ENCODE measurements at regions of chr9 and their contacts with region 1.

Region 1: DNA sequence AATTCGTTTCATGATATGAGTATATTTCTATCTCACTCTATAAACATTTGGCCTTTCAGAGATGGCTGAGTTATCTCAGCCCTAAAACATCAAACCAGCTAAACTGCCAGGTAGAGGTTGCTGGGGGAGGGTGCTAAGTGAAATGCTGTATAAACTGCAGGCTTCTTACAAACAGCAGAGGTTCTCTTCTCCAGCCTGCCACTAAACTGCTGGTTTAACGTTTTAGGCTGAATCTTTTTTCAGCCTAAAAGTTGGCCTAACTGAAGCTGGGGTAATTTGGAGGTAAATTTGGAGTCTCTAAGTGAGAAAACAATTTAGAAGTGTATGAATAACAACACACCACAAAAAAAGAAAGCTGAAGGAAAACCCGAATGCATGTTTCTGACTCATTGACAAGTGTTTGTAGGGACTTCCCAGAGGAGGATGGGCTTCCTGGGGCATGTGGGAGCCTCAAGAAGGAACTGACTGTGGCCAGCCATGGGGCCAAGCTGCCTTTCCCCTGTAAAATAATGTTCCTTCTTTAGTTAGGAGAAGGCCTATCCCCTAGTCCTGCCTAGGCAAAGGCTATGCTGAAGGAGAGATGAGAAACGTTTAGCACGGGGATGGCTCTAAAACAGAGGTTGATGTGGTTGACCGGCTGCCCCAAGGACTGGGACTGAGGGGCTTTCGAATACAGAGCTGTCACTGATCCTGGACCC is 44.3 kb downstream of the SLC28A3 start:
- DNase-seq: peak; percentile 87
- H3K4me3 Mint-ChIP-seq: peak overlapping the region; percentile 63
- H3K27ac Mint-ChIP-seq: peak overlapping the region; percentile 100
- H3K4me1 Mint-ChIP-seq: peaks cover 62% of the 10 kb centered on the region
- H3K27me3 Mint-ChIP-seq: no peaks in the 10 kb centered on the region

Region 2: GRCh38 chr9:83707768-83708514 is 588.4 kb before region 1 on chr9 and contains the start of gene UBQLN1:
- intact Hi-C with region 1: loop called (anchors 1 kb)
- DNase-seq: peak; percentile 97
- H3K4me3 Mint-ChIP-seq: peak within 1 kb of the TSS; percentile 87
- H3K27ac Mint-ChIP-seq: peak within 1 kb of the TSS; percentile 99
- H3K4me1 Mint-ChIP-seq: peaks cover 26% of the 10 kb centered on the region
- H3K27me3 Mint-ChIP-seq: no peaks in the 10 kb centered on the region
- total RNA-seq, gene UBQLN1: 131 and 144 TPM in 2 replicates

Region 3: GRCh38 chr9:83956434-83957247 is 339.7 kb before region 1 on chr9:
- intact Hi-C with region 1: loop called (anchors 10 kb)
- DNase-seq: peak; percentile 92
- H3K4me3 Mint-ChIP-seq: peak overlapping the region; percentile 99
- H3K27ac Mint-ChIP-seq: peak overlapping the region; percentile 97
- H3K4me1 Mint-ChIP-seq: peaks cover 12% of the 10 kb centered on the region
- H3K27me3 Mint-ChIP-seq: no peaks in the 10 kb centered on the region

Region 4: DNA sequence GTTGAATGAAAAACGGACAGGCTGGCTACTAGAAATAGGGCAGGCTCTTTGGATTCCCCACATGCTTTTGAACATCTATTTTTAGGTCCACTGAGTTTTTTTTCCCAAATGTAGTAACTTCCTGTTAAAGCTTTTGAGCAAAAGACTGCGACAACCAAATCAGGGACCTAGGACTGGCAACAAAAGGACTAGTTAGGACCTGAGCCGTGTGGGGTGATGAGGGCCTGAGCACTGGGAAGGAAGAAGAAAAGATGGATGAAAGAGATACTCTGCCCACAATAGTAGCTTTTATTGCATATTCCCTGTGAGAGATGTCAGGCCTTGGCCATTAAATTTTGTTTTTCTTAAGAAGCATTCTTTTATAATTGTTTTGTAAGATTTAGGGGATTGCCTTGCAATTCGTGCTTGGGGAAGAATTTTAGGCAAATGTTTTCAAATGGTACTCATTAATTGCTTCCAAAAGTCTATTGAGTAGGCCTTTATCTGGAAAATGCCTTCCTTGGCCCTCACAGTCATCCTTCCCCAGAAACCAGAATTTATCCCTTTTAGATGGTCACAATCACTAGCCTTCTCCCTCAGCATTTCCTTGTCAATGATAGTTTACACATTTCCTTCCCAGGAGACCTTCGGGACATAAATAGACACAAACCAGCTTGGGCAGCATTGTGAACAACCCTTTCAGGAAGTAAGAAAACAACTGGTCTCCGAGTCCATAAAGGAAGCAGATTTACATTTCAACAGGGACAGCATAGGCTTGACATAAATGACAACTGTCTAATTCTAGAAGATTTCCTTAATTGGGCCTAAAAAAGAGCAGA is 149.2 kb before region 1 on chr9:
- intact Hi-C with region 1: no loop called
- DNase-seq: peak; percentile 36
- H3K4me3 Mint-ChIP-seq: no peak overlapping the region
- H3K27ac Mint-ChIP-seq: no peak overlapping the region
- H3K4me1 Mint-ChIP-seq: peaks cover 2% of the 10 kb centered on the region
- H3K27me3 Mint-ChIP-seq: peaks cover 15% of the 10 kb centered on the region

Region 5: DNA sequence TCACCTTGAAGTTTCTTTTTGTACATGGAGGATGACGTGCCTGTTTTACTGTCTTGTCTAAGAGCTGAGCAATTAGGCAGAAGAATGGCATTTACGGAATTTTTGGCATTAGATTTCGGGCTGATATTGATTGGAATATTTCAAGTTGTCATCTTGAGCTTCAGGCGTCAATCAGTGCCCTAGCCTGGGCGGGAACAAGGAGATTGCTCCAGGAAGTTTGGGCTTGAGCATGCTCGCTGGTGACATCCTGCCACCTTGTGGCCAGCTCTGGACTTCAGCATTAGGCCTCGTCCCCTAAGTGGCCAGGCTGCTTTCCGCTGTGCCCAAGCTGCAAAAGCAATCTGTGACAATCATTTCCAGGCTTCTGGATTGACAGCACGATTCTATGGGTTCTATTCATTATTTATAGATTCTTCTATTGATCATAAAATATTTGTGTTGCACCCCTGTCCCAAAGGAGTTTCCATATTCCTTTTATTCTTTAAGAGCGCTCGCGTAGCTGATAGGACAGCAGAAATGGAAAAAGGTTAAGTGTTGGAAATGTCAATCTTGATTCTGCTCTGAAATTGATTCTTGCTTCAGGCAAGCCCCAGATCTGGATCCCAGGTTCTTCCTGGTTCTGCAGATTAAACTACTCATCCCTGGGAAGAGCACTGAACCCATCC is 35.1 kb before region 1 on chr9:
- intact Hi-C with region 1: loop called (anchors 1 kb)
- DNase-seq: peak; percentile 86
- H3K4me3 Mint-ChIP-seq: peak overlapping the region; percentile 44
- H3K27ac Mint-ChIP-seq: no peak overlapping the region
- H3K4me1 Mint-ChIP-seq: peaks cover 9% of the 10 kb centered on the region
- H3K27me3 Mint-ChIP-seq: peaks cover 14% of the 10 kb centered on the region

Region 6: DNA sequence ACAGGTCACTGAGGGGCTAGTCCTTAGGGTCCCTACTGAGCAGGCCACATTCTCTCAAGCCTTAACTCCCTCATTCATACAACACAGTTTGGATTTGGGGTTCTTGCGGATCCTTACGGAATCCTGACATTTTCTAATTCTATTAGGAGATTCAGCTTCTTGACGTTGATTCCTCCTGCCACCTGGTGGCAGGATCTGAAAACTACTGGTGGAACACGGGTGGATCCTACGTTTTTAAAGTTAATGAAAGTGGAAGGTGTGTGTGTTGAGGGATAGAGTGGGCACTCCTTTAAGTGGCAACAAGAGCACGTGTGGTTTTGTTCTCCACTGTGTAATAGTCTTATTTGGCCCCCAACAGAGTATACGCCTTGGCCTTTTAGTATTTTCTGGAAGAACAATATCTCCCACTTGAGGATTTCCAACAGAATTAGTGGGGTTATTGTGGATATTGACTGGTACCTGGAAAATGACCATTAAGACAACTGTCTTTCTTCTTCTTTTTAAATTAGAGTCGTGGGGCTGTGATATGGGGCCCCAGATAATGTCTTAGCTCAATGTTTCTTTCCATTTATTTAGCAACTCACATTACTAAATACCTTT is 19.1 kb after region 1 on chr9:
- intact Hi-C with region 1: loop called (anchors 1 kb)
- DNase-seq: peak; percentile 89
- H3K4me3 Mint-ChIP-seq: no peak overlapping the region
- H3K27ac Mint-ChIP-seq: no peak overlapping the region
- H3K4me1 Mint-ChIP-seq: peaks cover 19% of the 10 kb centered on the region
- H3K27me3 Mint-ChIP-seq: no peaks in the 10 kb centered on the region

Region 7: GRCh38 chr9:84325347-84325982 is 29.2 kb after region 1 on chr9:
- intact Hi-C with region 1: no loop called
- DNase-seq: no peak
- H3K4me3 Mint-ChIP-seq: no peak overlapping the region
- H3K27ac Mint-ChIP-seq: no peak overlapping the region
- H3K4me1 Mint-ChIP-seq: peaks cover 2% of the 10 kb centered on the region
- H3K27me3 Mint-ChIP-seq: peaks cover 9% of the 10 kb centered on the region

Region 8: GRCh38 chr9:85741875-85742629 is 1445.8 kb after region 1 on chr9 and contains the start of gene AGTPBP1:
- intact Hi-C with region 1: loop called (anchors 5 kb)
- DNase-seq: peak; percentile 99
- H3K4me3 Mint-ChIP-seq: peak within 1 kb of the TSS; percentile 88
- H3K27ac Mint-ChIP-seq: peak within 1 kb of the TSS; percentile 94
- H3K4me1 Mint-ChIP-seq: peaks cover 25% of the 10 kb centered on the region
- H3K27me3 Mint-ChIP-seq: peaks cover 8% of the 10 kb centered on the region
- total RNA-seq, gene AGTPBP1: 25.8 and 27.8 TPM in 2 replicates